Panc1 (cell line): ENCODE measurements at regions of chr2 and their contacts with region 1.

Region 1: DNA sequence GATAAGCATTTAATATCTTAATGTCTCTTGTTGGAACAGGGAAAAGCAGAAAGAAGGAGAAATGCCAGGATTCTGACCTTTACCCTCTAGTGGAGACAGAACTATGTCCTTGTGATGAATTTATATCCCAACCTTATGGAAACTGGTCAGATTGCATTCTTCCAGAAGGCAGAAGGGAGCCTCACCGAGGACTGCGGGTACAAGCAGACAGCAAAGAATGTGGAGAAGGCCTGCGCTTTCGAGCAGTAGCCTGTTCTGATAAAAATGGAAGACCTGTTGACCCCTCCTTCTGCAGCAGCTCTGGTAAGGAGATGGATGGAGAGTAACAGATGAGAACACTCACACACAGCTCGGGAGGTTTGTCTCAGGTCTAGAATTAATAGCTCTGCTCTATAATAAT is 552.7 kb upstream of the HNMT start:
- DNase-seq: no peak
- ATAC-seq: no peak
- H3K4me3 ChIP-seq: no peak overlapping the region
- H3K27ac ChIP-seq: no peak overlapping the region
- H3K4me1 ChIP-seq: no peaks in the 10 kb centered on the region
- H3K27me3 ChIP-seq: no peaks in the 10 kb centered on the region
- CTCF ChIP-seq: no peak

Region 2: GRCh38 chr2:137380610-137381009 is 31.0 kb before region 1 on chr2:
- CTCF ChIA-PET with region 1: no interaction called
- POLR2A ChIA-PET with region 1: no interaction called
- in situ Hi-C with region 1: no loop called
- intact Hi-C with region 1: loop called (anchors 1 kb)
- DNase-seq: no peak
- ATAC-seq: no peak
- H3K4me3 ChIP-seq: no peak overlapping the region
- H3K27ac ChIP-seq: no peak overlapping the region
- H3K4me1 ChIP-seq: no peaks in the 10 kb centered on the region
- H3K27me3 ChIP-seq: no peaks in the 10 kb centered on the region
- CTCF ChIP-seq: no peak

Region 3: GRCh38 chr2:137535897-137536296 is 124.3 kb after region 1 on chr2:
- CTCF ChIA-PET with region 1: no interaction called
- POLR2A ChIA-PET with region 1: no interaction called
- in situ Hi-C with region 1: no loop called
- intact Hi-C with region 1: no loop called
- DNase-seq: no peak
- ATAC-seq: no peak
- H3K4me3 ChIP-seq: no peak overlapping the region
- H3K27ac ChIP-seq: no peak overlapping the region
- H3K4me1 ChIP-seq: no peaks in the 10 kb centered on the region
- H3K27me3 ChIP-seq: no peaks in the 10 kb centered on the region
- CTCF ChIP-seq: no peak